ENCODE measurements at regions of chr1 and their contacts with region 1.

Region 1: DNA sequence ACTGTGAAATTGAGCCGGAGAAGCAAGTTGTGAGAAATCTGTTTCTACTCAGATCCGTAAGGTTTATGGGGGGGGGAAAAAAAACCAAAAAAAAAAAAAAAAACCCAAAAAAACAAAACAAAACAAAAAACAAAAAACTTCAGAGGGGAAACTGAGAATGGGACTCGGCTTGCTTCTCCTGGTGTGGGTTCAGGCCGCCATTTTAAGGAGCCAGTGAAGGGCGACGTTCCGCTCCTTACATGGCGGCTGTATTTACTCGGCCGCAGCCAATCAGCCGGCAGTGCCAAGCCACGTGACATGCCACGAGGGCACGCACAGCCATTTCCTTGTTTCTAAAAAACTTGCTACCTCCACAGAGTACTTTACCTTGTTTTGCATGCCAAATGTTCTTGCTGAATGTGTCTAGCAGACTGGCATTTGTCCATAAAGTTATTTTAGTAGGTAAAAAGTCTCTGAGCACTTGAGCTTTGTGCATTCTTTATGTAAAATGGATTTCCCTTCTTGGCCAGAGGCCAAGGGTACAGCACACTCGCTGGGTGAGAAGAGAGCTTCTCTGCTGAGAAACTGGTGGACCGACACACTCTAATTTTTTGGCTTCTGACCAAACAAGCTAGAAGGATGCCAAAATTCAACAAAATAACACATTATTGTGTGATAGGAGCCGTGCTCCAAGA is 101.8 kb downstream of the NFIA start:
- DNase-seq: peak; percentile 95
- ATAC-seq: peak; percentile 90

Region 2: DNA sequence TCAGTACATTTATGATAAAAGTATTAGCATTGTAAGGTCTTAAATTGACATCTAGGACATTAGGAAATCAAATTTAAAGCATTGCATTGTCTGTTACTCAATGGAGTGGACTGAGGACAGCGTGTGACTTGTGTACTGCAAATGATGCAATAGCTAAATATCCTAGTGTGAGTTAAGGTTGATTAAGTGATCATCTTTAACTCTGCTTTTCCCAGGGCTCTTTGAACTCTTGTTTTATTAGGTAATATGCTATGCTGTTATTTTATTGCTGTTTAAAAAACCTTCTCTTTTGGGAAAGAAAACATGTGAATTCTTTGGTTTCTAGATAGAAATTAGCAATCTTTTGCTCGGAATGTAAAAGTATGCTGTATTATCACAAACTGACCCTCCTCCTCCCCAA is 63.2 kb before region 1 on chr1:
- intact Hi-C with region 1: loop called (anchors 2 kb)
- DNase-seq: no peak
- ATAC-seq: peak; percentile 76

Region 3: GRCh38 chr1:61253059-61253735 is 69.0 kb after region 1 on chr1:
- intact Hi-C with region 1: loop called (anchors 5 kb)
- DNase-seq: peak; percentile 76
- ATAC-seq: peak; percentile 87

Region 4: DNA sequence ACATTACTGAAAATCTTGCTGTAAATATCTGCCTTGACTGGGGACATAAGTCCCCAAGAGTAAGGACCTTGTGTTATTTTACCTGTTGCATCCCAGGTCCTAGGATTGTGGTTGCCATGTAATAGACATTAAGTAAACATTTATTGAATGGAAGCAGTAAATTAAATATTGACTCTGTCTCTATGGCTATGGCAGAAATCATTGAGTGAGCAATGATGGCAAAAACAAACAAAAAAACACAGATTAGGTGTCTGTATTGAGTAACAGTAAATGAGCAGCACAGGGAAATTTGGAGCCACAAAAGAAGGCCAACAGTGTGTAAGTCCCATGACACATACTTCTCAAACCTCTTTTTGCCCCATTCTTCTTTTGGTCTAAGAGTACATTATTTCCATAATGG is 138.6 kb after region 1 on chr1:
- intact Hi-C with region 1: no loop called
- DNase-seq: no peak
- ATAC-seq: no peak

Region 5: GRCh38 chr1:61337981-61338848 is 154.0 kb after region 1 on chr1:
- intact Hi-C with region 1: loop called (anchors 5 kb)
- DNase-seq: peak; percentile 73
- ATAC-seq: peak; percentile 84